HCT116 (cell line): ENCODE measurements at regions of chr15 and their contacts with region 1.

Region 1: DNA sequence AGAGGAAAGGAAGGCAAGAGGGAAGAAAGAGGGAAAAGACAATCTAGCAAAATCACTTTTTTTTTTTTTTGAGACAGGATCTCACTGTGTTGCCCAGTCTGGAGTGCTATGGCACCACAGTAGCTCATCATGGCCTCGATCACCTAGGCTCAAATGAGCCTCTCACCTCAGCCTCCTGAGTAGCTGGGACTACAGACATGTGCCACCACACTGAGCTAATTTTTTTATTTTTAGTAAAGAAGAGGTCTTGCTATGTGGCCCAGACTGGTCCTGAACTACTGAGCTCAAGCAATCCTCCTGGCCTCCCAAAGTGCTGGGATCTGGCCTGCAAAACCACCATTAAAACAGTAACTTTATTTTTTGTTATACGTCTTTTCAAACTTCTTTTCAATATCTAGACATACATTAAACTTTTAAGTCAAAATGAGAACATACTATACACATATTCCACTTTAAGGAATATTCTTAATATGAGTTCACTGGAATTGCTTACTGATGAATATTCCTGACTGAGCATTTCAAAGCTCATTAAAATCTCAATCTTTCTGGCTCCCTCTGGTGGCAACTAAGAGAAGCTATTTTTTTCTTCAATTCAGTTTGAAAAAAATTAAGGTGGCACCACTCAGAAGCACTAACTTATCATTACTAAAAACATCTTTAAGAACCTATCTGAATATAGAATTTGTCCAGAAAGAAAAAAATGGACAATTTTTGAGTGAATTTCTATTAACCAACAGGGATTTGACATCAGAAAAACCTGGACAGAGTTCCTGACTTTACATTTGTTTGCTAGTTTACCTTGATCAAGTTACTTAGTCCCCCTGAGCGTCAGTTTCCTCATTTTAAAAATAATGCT is 40.9 kb downstream of the UACA start:
- DNase-seq: peak; percentile 45
- ATAC-seq: peak; percentile 52; the same call in 1 of the 2 replicates
- H3K4me3 ChIP-seq: no peak overlapping the region
- H3K27ac ChIP-seq: no peak overlapping the region
- H3K4me1 ChIP-seq: peaks cover 0 to 3% of the 10 kb centered on the region in 2 experiments; a peak in 1 of 4 replicates
- H3K27me3 ChIP-seq: no peaks in the 10 kb centered on the region
- CTCF ChIP-seq: peak; percentile 62 to 79 (median 66); a peak in 5 of 6 replicates
- POLR2A ChIP-seq: no peak
- RAD21 ChIP-seq: peak; percentile 57

Region 2: GRCh38 chr15:70478251-70478990 is 244.1 kb before region 1 on chr15:
- CTCF ChIA-PET with region 1: no interaction called
- POLR2A ChIA-PET with region 1: no interaction called
- RAD21 ChIA-PET with region 1: no interaction called
- intact Hi-C with region 1: no loop called
- DNase-seq: no peak
- ATAC-seq: no peak
- H3K4me3 ChIP-seq: no peak overlapping the region
- H3K27ac ChIP-seq: no peak overlapping the region
- H3K4me1 ChIP-seq: peaks cover 26 to 38% of the 10 kb centered on the region in 2 experiments
- H3K27me3 ChIP-seq: no peaks in the 10 kb centered on the region
- CTCF ChIP-seq: no peak
- POLR2A ChIP-seq: no peak
- RAD21 ChIP-seq: no peak

Region 3: GRCh38 chr15:70569091-70569621 is 153.3 kb before region 1 on chr15:
- CTCF ChIA-PET with region 1: interaction called, 27 read pairs
- POLR2A ChIA-PET with region 1: no interaction called
- RAD21 ChIA-PET with region 1: interaction called, 6 to 8 read pairs
- intact Hi-C with region 1: loop called (anchors 10 kb)
- DNase-seq: peak; percentile 73
- ATAC-seq: peak; percentile 89
- H3K4me3 ChIP-seq: peak overlapping the region; percentile 6 to 17; a peak in 3 of 4 replicates
- H3K27ac ChIP-seq: peak overlapping the region; percentile 56
- H3K4me1 ChIP-seq: peaks cover 20 to 25% of the 10 kb centered on the region in 2 experiments
- H3K27me3 ChIP-seq: no peaks in the 10 kb centered on the region
- CTCF ChIP-seq: peak; percentile 79 to 93 (median 87)
- POLR2A ChIP-seq: no peak
- RAD21 ChIP-seq: peak; percentile 93

Region 4: GRCh38 chr15:70679919-70680231 is 42.6 kb before region 1 on chr15:
- CTCF ChIA-PET with region 1: interaction called, 29 read pairs
- POLR2A ChIA-PET with region 1: interaction called, 5 read pairs
- RAD21 ChIA-PET with region 1: interaction called in 1 of 2 experiments, 3 read pairs
- intact Hi-C with region 1: no loop called
- DNase-seq: no peak
- ATAC-seq: no peak
- H3K4me3 ChIP-seq: no peak overlapping the region
- H3K27ac ChIP-seq: no peak overlapping the region
- H3K4me1 ChIP-seq: no peaks in the 10 kb centered on the region
- H3K27me3 ChIP-seq: no peaks in the 10 kb centered on the region
- CTCF ChIP-seq: no peak
- POLR2A ChIP-seq: no peak
- RAD21 ChIP-seq: no peak

Region 5: DNA sequence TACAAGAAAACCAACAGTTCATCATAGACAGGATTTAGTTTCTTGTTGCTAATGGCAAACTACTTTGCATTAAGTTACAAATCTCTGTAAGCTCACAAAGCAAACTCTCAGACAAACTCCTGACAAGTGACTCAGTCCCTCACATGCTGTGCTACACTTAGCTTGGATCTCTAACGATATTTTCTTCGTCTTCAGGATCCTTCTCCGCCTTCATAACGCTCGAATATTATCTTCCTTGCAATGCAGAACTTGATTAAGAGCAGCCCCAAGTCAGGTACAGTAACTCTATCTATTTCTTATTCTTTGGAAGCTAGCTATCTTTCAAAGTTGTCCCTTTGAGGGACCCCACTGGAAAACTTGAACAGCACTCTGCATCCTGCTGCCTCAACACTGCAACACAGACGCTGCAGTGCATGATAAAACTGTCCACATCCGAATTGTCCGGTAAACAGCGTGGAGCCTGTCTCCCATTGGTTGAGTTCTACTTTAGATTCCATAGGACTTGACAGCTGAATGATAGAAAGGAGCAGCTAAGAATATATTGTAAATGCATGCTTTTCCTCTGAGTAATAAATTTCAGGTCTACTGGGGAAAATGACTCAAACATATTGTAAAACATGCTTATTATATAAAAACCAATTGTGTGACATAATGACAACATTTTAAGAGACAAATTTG is 20.5 kb before region 1 on chr15:
- CTCF ChIA-PET with region 1: interaction called, 13 read pairs
- POLR2A ChIA-PET with region 1: no interaction called
- RAD21 ChIA-PET with region 1: no interaction called
- intact Hi-C with region 1: no loop called
- DNase-seq: no peak
- ATAC-seq: no peak
- H3K4me3 ChIP-seq: no peak overlapping the region
- H3K27ac ChIP-seq: no peak overlapping the region
- H3K4me1 ChIP-seq: peaks cover 14 to 49% of the 10 kb centered on the region in 2 experiments; a peak in 3 of 4 replicates
- H3K27me3 ChIP-seq: no peaks in the 10 kb centered on the region
- CTCF ChIP-seq: no peak
- POLR2A ChIP-seq: no peak
- RAD21 ChIP-seq: no peak

Region 6: DNA sequence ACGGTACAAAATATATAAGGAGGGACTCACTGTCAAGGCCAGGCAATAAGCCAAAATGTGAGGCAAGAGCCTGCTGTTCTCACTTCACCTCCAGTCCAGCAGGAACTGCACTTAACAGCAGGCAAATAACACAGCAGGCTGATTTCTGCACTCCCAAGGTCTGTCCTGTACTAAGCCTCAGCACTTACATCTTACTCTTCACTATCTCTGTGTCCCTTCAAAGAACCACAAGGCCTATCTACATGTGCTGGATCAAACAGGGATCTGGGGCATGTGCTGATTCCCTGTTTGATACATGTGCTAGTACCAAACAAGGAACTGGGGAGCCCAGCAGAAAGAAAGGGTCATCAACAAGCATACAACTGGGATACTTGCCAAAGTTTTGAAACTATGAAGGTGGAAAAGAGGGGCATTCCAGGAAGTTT is 18.6 kb after region 1 on chr15:
- CTCF ChIA-PET with region 1: interaction called, 12 read pairs
- POLR2A ChIA-PET with region 1: no interaction called
- RAD21 ChIA-PET with region 1: no interaction called
- intact Hi-C with region 1: no loop called
- DNase-seq: peak; percentile 31
- ATAC-seq: peak; percentile 56
- H3K4me3 ChIP-seq: peak overlapping the region in 1 of 2 experiments; percentile 37; a peak in 1 of 4 replicates
- H3K27ac ChIP-seq: peak overlapping the region; percentile 64
- H3K4me1 ChIP-seq: peaks cover 30 to 32% of the 10 kb centered on the region in 2 experiments
- H3K27me3 ChIP-seq: no peaks in the 10 kb centered on the region
- CTCF ChIP-seq: no peak
- POLR2A ChIP-seq: no peak
- RAD21 ChIP-seq: no peak